ENCODE measurements at regions of chr12 and their contacts with region 1.

Region 1: DNA sequence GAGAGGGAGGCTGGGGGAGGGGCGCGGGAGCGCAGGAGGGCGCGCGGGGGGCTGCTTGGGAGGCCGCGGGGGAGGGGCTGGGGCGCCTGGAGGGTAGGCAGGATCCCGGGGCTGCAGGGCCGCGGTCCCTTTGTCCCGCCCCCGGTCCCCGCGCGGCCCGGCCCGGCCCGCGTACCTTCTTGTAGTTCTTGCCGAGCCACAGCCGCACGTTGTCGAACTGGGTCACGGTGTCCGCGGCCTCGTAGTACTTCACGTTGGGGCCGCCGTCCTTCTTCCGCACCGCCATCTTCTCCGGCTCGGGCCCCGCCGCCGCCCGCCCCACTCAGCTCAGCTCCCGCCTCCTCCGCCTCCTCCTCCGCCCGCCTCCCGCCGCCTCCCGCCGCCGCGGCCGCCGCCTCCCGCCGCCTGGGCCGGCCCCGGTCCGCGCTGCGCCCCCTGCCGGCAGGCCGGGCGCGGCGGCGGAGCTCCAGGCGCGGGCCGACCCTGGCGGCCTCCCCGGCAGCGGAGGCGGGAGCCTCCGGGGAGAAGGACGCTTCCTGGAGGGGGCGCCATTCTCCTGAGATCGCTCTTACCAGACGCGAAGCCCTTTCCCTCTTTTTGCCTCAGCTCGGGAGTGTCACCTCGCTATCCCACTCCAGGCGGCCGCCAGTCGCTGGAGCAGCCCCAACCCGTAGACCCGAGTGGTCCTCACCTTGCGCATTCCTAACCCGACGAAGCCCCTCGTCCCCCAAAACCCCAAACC is at the start of gene SMARCC2:
- DNase-seq: peak; percentile 26
- ATAC-seq: peak; percentile 81
- H3K4me3 ChIP-seq: peak within 1 kb of the TSS; percentile 98
- H3K27ac ChIP-seq: peak within 1 kb of the TSS; percentile 91
- H3K4me1 ChIP-seq: 0 out of 2 replicates have a peak, but pooled peaks cover 4% of the 10 kb centered on the region
- H3K27me3 ChIP-seq: no peaks in the 10 kb centered on the region
- CTCF ChIP-seq: peak; percentile 68 to 87 (median 72); a peak in 5 of 6 replicates
- EP300 ChIP-seq: no peak
- POLR2A ChIP-seq: peak; percentile 79
- RAD21 ChIP-seq: peak; percentile 46
- polyA plus RNA-seq, gene SMARCC2: 13.6 to 27.8 TPM

Region 2: GRCh38 chr12:56117778-56118687 is 71.3 kb before region 1 on chr12 and contains the start of gene ZC3H10:
- CTCF ChIA-PET with region 1: interaction called, 129 read pairs
- POLR2A ChIA-PET with region 1: interaction called, 46 read pairs
- RAD21 ChIA-PET with region 1: interaction called, 98 read pairs
- SMC1A ChIA-PET with region 1: interaction called, 50 read pairs
- in situ Hi-C with region 1: no loop called
- intact Hi-C with region 1: loop called (anchors 1 kb)
- DNase-seq: peak; percentile 99
- ATAC-seq: peak; percentile 86
- H3K4me3 ChIP-seq: peak within 1 kb of the TSS; percentile 90
- H3K27ac ChIP-seq: peak within 1 kb of the TSS; percentile 79
- H3K4me1 ChIP-seq: peaks cover 15% of the 10 kb centered on the region
- H3K27me3 ChIP-seq: no peaks in the 10 kb centered on the region
- CTCF ChIP-seq: peak; percentile 40 to 69 (median 48)
- EP300 ChIP-seq: no peak
- POLR2A ChIP-seq: peak; percentile 99
- RAD21 ChIP-seq: no peak
- polyA plus RNA-seq, gene ZC3H10: 0.56 to 0.75 TPM

Region 3: DNA sequence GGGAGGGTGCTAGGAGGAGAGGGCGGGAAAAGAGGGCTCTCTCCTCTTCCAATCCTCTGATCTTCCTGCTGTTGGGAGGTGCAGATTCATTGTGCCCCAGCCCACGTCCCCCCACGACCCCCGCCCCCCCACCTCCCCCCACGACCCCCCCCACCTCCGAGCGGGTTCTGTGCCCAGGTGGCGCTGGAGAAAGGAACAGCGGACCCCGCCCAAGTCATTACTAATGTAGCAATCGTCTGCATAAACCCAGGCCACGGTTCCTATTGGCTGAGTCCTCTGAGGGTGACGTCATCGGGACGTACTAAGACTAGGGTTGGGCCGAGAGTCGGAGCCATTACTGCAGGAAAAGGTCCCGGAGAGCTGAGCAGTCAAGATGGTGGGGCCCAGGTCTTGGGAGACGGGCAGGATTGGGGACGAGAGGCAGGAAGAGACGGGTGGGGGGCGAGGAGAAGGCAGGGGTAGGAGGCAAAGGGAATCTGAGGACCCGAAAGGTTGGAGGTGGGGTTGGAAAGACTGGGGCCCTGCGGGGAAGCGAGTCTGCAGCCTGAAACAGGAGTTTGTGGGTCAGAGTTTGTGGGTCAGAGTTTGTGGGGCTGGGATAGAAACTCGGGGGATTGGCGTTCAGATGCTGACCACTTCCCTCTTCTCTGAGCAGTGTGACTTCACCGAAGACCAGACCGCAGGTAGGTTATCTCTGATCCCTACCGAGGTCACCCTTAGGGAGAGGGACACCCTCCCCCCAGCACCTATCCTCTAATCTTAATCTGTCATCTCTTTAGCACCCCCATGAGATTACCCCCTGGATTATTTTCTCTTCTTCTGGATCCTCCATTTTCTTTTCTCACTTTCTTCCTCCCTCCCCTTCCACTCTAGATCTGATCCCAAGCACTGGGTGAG is 31.1 kb before region 1 on chr12 and contains the start of gene MYL6:
- CTCF ChIA-PET with region 1: interaction called, 13 read pairs
- POLR2A ChIA-PET with region 1: interaction called, 11 read pairs
- RAD21 ChIA-PET with region 1: interaction called, 14 read pairs
- SMC1A ChIA-PET with region 1: interaction called, 12 read pairs
- in situ Hi-C with region 1: no loop called
- intact Hi-C with region 1: loop called (anchors 2 kb)
- DNase-seq: peak; percentile 88
- ATAC-seq: peak; percentile 87
- H3K4me3 ChIP-seq: peak within 1 kb of the TSS; percentile 90
- H3K27ac ChIP-seq: peak within 1 kb of the TSS; percentile 91
- H3K4me1 ChIP-seq: peaks cover 24% of the 10 kb centered on the region
- H3K27me3 ChIP-seq: no peaks in the 10 kb centered on the region
- CTCF ChIP-seq: no peak
- EP300 ChIP-seq: no peak
- POLR2A ChIP-seq: peak; percentile 99
- RAD21 ChIP-seq: no peak
- polyA plus RNA-seq, gene MYL6: 3,206 to 4,116 TPM

Region 4: GRCh38 chr12:56258057-56258819 is 68.9 kb after region 1 on chr12 and contains the start of gene ANKRD52:
- CTCF ChIA-PET with region 1: interaction called, 10 read pairs
- POLR2A ChIA-PET with region 1: interaction called, 3 read pairs
- RAD21 ChIA-PET with region 1: interaction called, 4 read pairs
- SMC1A ChIA-PET with region 1: no interaction called
- in situ Hi-C with region 1: no loop called
- intact Hi-C with region 1: loop called (anchors 1 kb)
- DNase-seq: no peak
- ATAC-seq: peak; percentile 98
- H3K4me3 ChIP-seq: peak within 1 kb of the TSS; percentile 95
- H3K27ac ChIP-seq: peak within 1 kb of the TSS; percentile 73
- H3K4me1 ChIP-seq: peaks cover 7% of the 10 kb centered on the region
- H3K27me3 ChIP-seq: no peaks in the 10 kb centered on the region
- CTCF ChIP-seq: peak; percentile 54 to 84 (median 57); a peak in 5 of 6 replicates
- EP300 ChIP-seq: 0 out of 4 replicates have a peak, but pooled peaks of 1 of the 2 experiments have one; percentile 12
- POLR2A ChIP-seq: peak; percentile 71
- RAD21 ChIP-seq: no peak
- polyA plus RNA-seq, gene ANKRD52: 0.90 to 1.2 TPM

Region 5: GRCh38 chr12:56333679-56334489 is 144.5 kb after region 1 on chr12 and contains the start of gene PAN2:
- CTCF ChIA-PET with region 1: no interaction called
- POLR2A ChIA-PET with region 1: no interaction called
- RAD21 ChIA-PET with region 1: no interaction called
- SMC1A ChIA-PET with region 1: no interaction called
- in situ Hi-C with region 1: no loop called
- intact Hi-C with region 1: loop called (anchors 1 kb)
- DNase-seq: peak; percentile 89
- ATAC-seq: peak; percentile 97
- H3K4me3 ChIP-seq: peak within 1 kb of the TSS; percentile 97
- H3K27ac ChIP-seq: peak within 1 kb of the TSS; percentile 99
- H3K4me1 ChIP-seq: peaks cover 24% of the 10 kb centered on the region
- H3K27me3 ChIP-seq: no peaks in the 10 kb centered on the region
- CTCF ChIP-seq: peak; percentile 37 to 47 (median 43); a peak in 5 of 6 replicates
- EP300 ChIP-seq: 0 out of 4 replicates have a peak, but pooled peaks have one; percentile 6 to 29
- POLR2A ChIP-seq: peak; percentile 73
- RAD21 ChIP-seq: peak; percentile 33; the same call in 1 of the 2 replicates
- polyA plus RNA-seq, gene PAN2: 14.4 to 14.5 TPM

Region 6: GRCh38 chr12:56468216-56469006 is 279.1 kb after region 1 on chr12 and contains the start of gene SPRYD4:
- CTCF ChIA-PET with region 1: interaction called, 15 read pairs
- POLR2A ChIA-PET with region 1: no interaction called
- RAD21 ChIA-PET with region 1: interaction called, 11 read pairs
- SMC1A ChIA-PET with region 1: interaction called, 9 read pairs
- in situ Hi-C with region 1: loop called (anchors 5 kb)
- intact Hi-C with region 1: loop called (anchors 1 kb)
- DNase-seq: peak; percentile 70
- ATAC-seq: peak; percentile 92
- H3K4me3 ChIP-seq: peak within 1 kb of the TSS; percentile 76
- H3K27ac ChIP-seq: peak within 1 kb of the TSS; percentile 93
- H3K4me1 ChIP-seq: peaks cover 15% of the 10 kb centered on the region
- H3K27me3 ChIP-seq: no peaks in the 10 kb centered on the region
- CTCF ChIP-seq: peak; percentile 22 to 68 (median 27); a peak in 4 of 6 replicates
- EP300 ChIP-seq: no peak
- POLR2A ChIP-seq: peak; percentile 95
- RAD21 ChIP-seq: no peak
- polyA plus RNA-seq, gene SPRYD4: 4.8 to 6.0 TPM

Measured in GM12878 (cell line).